SK-N-SH (cell line): ENCODE measurements at regions of chr16 and their contacts with region 1.

Region 1: DNA sequence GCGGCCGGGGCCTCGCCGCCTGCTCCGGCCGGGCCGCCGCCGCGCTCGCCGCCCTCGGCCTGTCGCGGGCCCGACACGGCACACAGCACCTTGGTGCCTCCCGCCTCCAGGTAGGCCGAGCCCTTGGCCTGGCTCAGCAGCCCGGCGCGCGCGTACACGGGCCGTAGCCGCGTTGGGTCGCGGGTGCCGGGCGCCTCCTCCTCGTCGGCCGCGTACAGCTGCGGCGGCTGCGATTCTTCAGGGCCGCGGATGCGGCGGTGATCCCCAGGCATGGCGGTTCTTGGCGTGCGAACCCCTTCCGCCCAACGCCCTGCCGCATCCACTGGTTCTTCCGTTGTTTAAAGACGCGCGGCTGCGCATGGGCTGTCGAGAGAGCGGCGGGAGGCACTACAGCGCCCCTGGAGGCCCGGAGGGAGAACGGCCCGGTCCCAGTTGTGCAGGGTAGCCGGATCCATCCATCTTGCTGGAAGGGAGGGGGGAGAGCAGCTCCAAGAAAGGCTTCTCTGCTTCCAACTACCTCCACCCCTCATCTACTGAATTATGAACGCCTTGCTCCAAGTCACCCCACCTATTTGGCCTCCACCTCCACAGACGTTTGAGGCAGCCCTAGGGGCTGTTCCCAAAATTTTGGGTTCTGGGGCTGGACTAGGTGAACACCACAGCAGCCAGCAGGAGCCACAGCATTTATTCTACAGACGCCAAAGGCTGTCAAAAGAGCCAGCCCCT is at the start of gene EXOSC6:
- DNase-seq: peak; percentile 97
- H3K4me3 ChIP-seq: peak within 1 kb of the TSS; percentile 68 to 70
- H3K27ac ChIP-seq: peak within 1 kb of the TSS; percentile 65 to 83; a peak in 3 of 4 replicates
- H3K4me1 ChIP-seq: peaks cover 0 to 8% of the 10 kb centered on the region in 2 experiments; a peak in 2 of 4 replicates
- H3K27me3 ChIP-seq: no peaks in the 10 kb centered on the region
- CTCF ChIP-seq: peak; percentile 87
- EP300 ChIP-seq: peak in 1 of 2 experiments; percentile 22; a peak in 1 of 4 replicates
- RAD21 ChIP-seq: no peak
- polyA plus RNA-seq, gene EXOSC6: 10.0 and 10.6 TPM in 2 replicates

Region 2: GRCh38 chr16:69644790-69645189 is 607.0 kb before region 1 on chr16:
- CTCF ChIA-PET with region 1: no interaction called
- POLR2A ChIA-PET with region 1: no interaction called
- DNase-seq: no peak
- H3K4me3 ChIP-seq: no peak overlapping the region
- H3K27ac ChIP-seq: no peak overlapping the region
- H3K4me1 ChIP-seq: no peaks in the 10 kb centered on the region; a peak in 1 of 4 replicates
- H3K27me3 ChIP-seq: no peaks in the 10 kb centered on the region
- CTCF ChIP-seq: no peak
- EP300 ChIP-seq: no peak
- RAD21 ChIP-seq: no peak

Region 3: DNA sequence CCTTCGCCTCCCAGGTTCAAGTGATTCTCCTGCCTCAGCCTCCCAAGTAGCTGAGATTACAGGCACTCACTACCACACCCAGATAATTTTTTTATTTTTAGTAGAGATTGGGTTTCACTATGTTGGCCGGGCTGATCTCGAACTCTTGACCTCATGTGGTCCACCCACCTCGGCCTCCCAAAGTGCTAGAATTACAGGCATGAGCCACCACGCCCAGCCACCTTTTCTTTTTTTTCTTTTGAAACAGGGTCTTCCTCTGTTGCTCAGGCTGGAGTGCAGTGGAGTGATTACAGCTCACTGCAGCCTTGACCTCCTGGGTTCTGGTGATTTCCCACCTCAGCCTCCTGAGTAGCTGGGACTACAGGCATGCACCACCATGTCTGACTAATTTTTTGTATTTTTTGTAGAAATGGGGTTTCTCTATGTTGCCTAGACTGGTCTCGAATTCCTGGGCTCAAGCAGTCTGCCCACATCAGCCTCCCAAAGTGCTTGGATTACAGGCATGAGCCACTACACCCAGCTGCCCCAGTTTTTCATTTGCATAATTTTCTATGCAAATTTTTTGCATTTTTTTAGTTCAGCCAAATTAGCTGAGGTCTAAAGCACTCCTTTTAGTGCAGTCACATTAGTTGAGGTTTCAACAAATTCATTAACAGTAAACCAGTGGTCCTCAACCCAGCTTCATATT is 478.4 kb before region 1 on chr16:
- CTCF ChIA-PET with region 1: no interaction called
- POLR2A ChIA-PET with region 1: no interaction called
- DNase-seq: no peak
- H3K4me3 ChIP-seq: no peak overlapping the region
- H3K27ac ChIP-seq: no peak overlapping the region
- H3K4me1 ChIP-seq: no peaks in the 10 kb centered on the region
- H3K27me3 ChIP-seq: no peaks in the 10 kb centered on the region
- CTCF ChIP-seq: no peak
- EP300 ChIP-seq: no peak
- RAD21 ChIP-seq: no peak

Region 4: GRCh38 chr16:69906838-69907401 is 344.9 kb before region 1 on chr16:
- CTCF ChIA-PET with region 1: no interaction called
- POLR2A ChIA-PET with region 1: no interaction called
- DNase-seq: no peak
- H3K4me3 ChIP-seq: no peak overlapping the region
- H3K27ac ChIP-seq: no peak overlapping the region
- H3K4me1 ChIP-seq: no peaks in the 10 kb centered on the region
- H3K27me3 ChIP-seq: no peaks in the 10 kb centered on the region
- CTCF ChIP-seq: no peak
- EP300 ChIP-seq: no peak
- RAD21 ChIP-seq: no peak

Region 5: GRCh38 chr16:70267516-70267915 is 15.7 kb after region 1 on chr16:
- CTCF ChIA-PET with region 1: interaction called, 76 read pairs
- POLR2A ChIA-PET with region 1: interaction called, 5 read pairs
- DNase-seq: peak; percentile 70
- H3K4me3 ChIP-seq: no peak overlapping the region
- H3K27ac ChIP-seq: no peak overlapping the region
- H3K4me1 ChIP-seq: no peaks in the 10 kb centered on the region
- H3K27me3 ChIP-seq: no peaks in the 10 kb centered on the region
- CTCF ChIP-seq: peak; percentile 72
- EP300 ChIP-seq: no peak
- RAD21 ChIP-seq: peak; percentile 55

Region 6: GRCh38 chr16:70276392-70276791 is 24.6 kb after region 1 on chr16:
- CTCF ChIA-PET with region 1: interaction called, 15 read pairs
- POLR2A ChIA-PET with region 1: interaction called, 3 read pairs
- DNase-seq: no peak
- H3K4me3 ChIP-seq: no peak overlapping the region
- H3K27ac ChIP-seq: no peak overlapping the region
- H3K4me1 ChIP-seq: peaks cover 0 to 8% of the 10 kb centered on the region in 2 experiments; a peak in 1 of 4 replicates
- H3K27me3 ChIP-seq: no peaks in the 10 kb centered on the region
- CTCF ChIP-seq: no peak
- EP300 ChIP-seq: no peak
- RAD21 ChIP-seq: no peak

Region 7: GRCh38 chr16:70289229-70290098 is 37.7 kb after region 1 on chr16 and contains the start of gene AARS1:
- CTCF ChIA-PET with region 1: interaction called, 10 read pairs
- POLR2A ChIA-PET with region 1: interaction called, 3 read pairs
- DNase-seq: peak; percentile 97
- H3K4me3 ChIP-seq: peak within 1 kb of the TSS; percentile 65 to 76
- H3K27ac ChIP-seq: peak within 1 kb of the TSS; percentile 85 to 88
- H3K4me1 ChIP-seq: peaks cover 2 to 10% of the 10 kb centered on the region in 2 experiments; a peak in 2 of 4 replicates
- H3K27me3 ChIP-seq: no peaks in the 10 kb centered on the region
- CTCF ChIP-seq: no peak
- EP300 ChIP-seq: no peak
- RAD21 ChIP-seq: no peak
- polyA plus RNA-seq, gene AARS1: 70.5 and 77.3 TPM in 2 replicates

Region 8: DNA sequence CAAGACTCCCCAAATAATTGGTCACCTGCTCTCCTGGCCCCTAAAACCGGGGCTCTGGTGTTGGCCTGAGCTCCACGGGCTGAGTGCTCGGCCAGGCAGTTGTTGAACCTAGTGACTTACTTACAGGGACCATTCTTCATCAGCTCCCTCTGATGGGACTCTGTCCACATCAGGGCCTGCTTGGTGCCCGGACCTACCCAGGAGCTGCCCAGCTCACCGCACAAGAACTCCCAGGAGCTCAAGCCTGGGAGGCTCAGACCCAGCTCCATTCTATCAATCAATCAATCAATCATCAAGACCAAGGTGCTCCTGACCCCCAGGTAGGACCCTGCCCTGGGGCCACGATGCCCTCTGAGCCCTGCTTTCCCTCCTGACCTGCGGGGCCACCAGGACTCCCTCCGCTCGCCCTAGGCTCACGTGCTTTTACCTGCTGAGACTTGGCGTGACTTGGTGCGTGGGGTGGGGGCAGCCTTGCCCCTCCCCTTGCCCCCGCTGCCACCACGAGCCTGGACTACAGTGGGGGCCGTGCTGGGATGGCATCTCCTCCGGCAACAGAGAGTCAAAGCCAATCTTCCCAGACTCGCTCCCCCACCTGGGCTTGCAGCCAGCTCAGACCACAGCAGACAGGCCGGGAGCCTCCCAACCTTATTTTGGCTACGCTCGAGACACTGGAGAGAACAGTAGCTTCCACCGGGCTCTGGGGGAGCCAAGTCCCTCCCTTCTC is 410.3 kb after region 1 on chr16:
- CTCF ChIA-PET with region 1: no interaction called
- POLR2A ChIA-PET with region 1: no interaction called
- DNase-seq: peak; percentile 45
- H3K4me3 ChIP-seq: no peak overlapping the region
- H3K27ac ChIP-seq: no peak overlapping the region; a peak in 1 of 4 replicates
- H3K4me1 ChIP-seq: peaks cover 0 to 8% of the 10 kb centered on the region in 2 experiments; a peak in 1 of 4 replicates
- H3K27me3 ChIP-seq: no peaks in the 10 kb centered on the region
- CTCF ChIP-seq: no peak
- EP300 ChIP-seq: no peak
- RAD21 ChIP-seq: no peak